Activated B cell treated with CpG ODN at 0.5 μM for 24 hours (primary cell): ENCODE measurements at regions of chr1 and their contacts with region 1.

Region 1: GRCh38 chr1:107782217-107782845 is 182.6 kb downstream of the VAV3 start:
- DNase-seq: no peak
- ATAC-seq: peak; percentile 19
- H3K4me3 Mint-ChIP-seq: no peak overlapping the region
- H3K27ac Mint-ChIP-seq: no peak overlapping the region
- H3K4me1 Mint-ChIP-seq: peaks cover 54% of the 10 kb centered on the region
- H3K27me3 Mint-ChIP-seq: no peaks in the 10 kb centered on the region
- CTCF ChIP-seq: peak; percentile 83

Region 2: DNA sequence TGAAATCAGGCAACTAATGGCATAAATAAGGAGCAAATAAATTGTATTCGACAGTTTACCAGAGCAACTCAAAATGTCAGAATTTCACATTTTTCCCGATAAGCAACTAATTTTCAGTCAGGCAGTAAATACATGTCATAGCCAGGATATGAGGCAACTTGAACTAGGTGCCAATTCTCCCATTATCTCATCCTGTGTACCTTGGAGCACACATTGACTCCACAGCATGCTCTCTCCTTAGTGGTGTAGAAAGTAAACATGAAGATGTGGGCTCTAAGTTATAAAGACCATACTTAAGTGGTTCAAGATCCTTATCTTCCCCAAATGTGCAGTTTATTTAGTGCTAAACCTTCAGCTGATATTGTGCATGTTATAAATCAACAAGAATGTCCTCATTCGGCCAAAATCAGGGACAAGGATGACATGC is 15.2 kb before region 1 on chr1:
- CTCF ChIA-PET with region 1: no interaction called
- POLR2A ChIA-PET with region 1: no interaction called
- intact Hi-C with region 1: no loop called
- DNase-seq: no peak
- ATAC-seq: no peak
- H3K4me3 Mint-ChIP-seq: no peak overlapping the region
- H3K27ac Mint-ChIP-seq: no peak overlapping the region
- H3K4me1 Mint-ChIP-seq: no peaks in the 10 kb centered on the region
- H3K27me3 Mint-ChIP-seq: no peaks in the 10 kb centered on the region
- CTCF ChIP-seq: no peak

Region 3: GRCh38 chr1:107804134-107804533 is 21.8 kb after region 1 on chr1:
- CTCF ChIA-PET with region 1: interaction called, 3 read pairs
- POLR2A ChIA-PET with region 1: interaction called, 4 read pairs
- intact Hi-C with region 1: loop called (anchors 2 kb)
- DNase-seq: no peak
- ATAC-seq: peak; percentile 35
- H3K4me3 Mint-ChIP-seq: peak overlapping the region; percentile 80
- H3K27ac Mint-ChIP-seq: peak overlapping the region; percentile 96
- H3K4me1 Mint-ChIP-seq: peaks cover 94% of the 10 kb centered on the region
- H3K27me3 Mint-ChIP-seq: no peaks in the 10 kb centered on the region
- CTCF ChIP-seq: no peak

Region 4: GRCh38 chr1:107870696-107871095 is 88.4 kb after region 1 on chr1:
- CTCF ChIA-PET with region 1: interaction called, 6 read pairs
- POLR2A ChIA-PET with region 1: no interaction called
- intact Hi-C with region 1: loop called (anchors 2 kb)
- DNase-seq: no peak
- ATAC-seq: no peak
- H3K4me3 Mint-ChIP-seq: peak overlapping the region; percentile 2
- H3K27ac Mint-ChIP-seq: peak overlapping the region; percentile 90
- H3K4me1 Mint-ChIP-seq: peaks cover 93% of the 10 kb centered on the region
- H3K27me3 Mint-ChIP-seq: no peaks in the 10 kb centered on the region
- CTCF ChIP-seq: no peak

Region 5: DNA sequence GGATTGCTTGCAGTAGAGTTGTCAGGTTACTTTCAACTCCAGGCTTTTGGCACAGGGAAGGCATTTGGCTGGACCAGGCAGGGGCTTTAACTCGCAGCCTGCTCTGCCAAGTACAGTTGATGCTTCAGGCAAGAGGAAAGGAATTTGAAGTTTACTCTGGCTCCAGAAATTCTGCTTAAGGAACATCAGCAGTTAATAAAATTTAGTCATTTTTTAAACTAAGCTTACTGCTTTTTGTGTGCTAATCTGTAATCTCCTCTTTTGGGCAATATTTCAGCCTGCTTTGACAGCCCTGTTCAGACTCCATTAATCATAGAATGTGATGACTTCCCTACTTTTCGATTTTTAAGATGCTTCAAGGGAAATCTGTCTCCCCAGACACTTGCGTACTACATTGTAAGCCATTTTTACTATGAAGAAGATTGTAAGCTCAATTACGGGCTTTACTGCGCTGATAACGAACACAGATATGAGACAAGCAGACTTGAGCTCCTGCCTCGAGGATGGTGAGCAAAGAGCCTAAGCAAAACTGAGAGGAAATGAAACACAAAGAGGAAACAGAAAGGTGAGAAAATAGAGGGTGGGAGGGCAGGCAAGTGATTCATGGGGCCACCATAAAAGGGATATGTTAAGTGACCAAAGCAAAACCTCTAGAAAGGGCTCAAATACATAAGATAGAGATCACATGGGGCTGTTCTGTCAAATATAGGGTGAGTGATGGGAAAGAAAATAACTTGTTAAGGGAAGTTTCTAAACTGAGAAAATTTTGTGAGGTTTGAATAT is 259.2 kb after region 1 on chr1:
- CTCF ChIA-PET with region 1: interaction called, 3 read pairs
- POLR2A ChIA-PET with region 1: interaction called, 4 read pairs
- intact Hi-C with region 1: loop called (anchors 2 kb)
- DNase-seq: no peak
- ATAC-seq: peak; percentile 54
- H3K4me3 Mint-ChIP-seq: peak overlapping the region; percentile 55
- H3K27ac Mint-ChIP-seq: peak overlapping the region; percentile 82
- H3K4me1 Mint-ChIP-seq: peaks cover 39% of the 10 kb centered on the region
- H3K27me3 Mint-ChIP-seq: no peaks in the 10 kb centered on the region
- CTCF ChIP-seq: no peak

Region 6: GRCh38 chr1:108125312-108126138 is 343.2 kb after region 1 on chr1:
- CTCF ChIA-PET with region 1: interaction called, 488 read pairs
- POLR2A ChIA-PET with region 1: interaction called, 15 read pairs
- intact Hi-C with region 1: loop called (anchors 1 kb)
- DNase-seq: peak; percentile 42
- ATAC-seq: peak; percentile 91
- H3K4me3 Mint-ChIP-seq: no peak overlapping the region
- H3K27ac Mint-ChIP-seq: peak overlapping the region; percentile 2
- H3K4me1 Mint-ChIP-seq: peaks cover 4% of the 10 kb centered on the region
- H3K27me3 Mint-ChIP-seq: no peaks in the 10 kb centered on the region
- CTCF ChIP-seq: peak; percentile 97

Region 7: GRCh38 chr1:108190707-108191411 is 408.5 kb after region 1 on chr1:
- CTCF ChIA-PET with region 1: no interaction called
- POLR2A ChIA-PET with region 1: no interaction called
- intact Hi-C with region 1: no loop called
- DNase-seq: no peak
- ATAC-seq: no peak
- H3K4me3 Mint-ChIP-seq: no peak overlapping the region
- H3K27ac Mint-ChIP-seq: no peak overlapping the region
- H3K4me1 Mint-ChIP-seq: no peaks in the 10 kb centered on the region
- H3K27me3 Mint-ChIP-seq: no peaks in the 10 kb centered on the region
- CTCF ChIP-seq: no peak

Region 8: GRCh38 chr1:108512239-108512981 is 730.1 kb after region 1 on chr1:
- CTCF ChIA-PET with region 1: interaction called, 3 read pairs
- POLR2A ChIA-PET with region 1: no interaction called
- intact Hi-C with region 1: loop called (anchors 2 kb)
- DNase-seq: no peak
- ATAC-seq: peak; percentile 85
- H3K4me3 Mint-ChIP-seq: no peak overlapping the region
- H3K27ac Mint-ChIP-seq: no peak overlapping the region
- H3K4me1 Mint-ChIP-seq: no peaks in the 10 kb centered on the region
- H3K27me3 Mint-ChIP-seq: no peaks in the 10 kb centered on the region
- CTCF ChIP-seq: peak; percentile 95